Mammary epithelial cell (primary cell): ENCODE measurements at regions of chr3 and their contacts with region 1.

Region 1: DNA sequence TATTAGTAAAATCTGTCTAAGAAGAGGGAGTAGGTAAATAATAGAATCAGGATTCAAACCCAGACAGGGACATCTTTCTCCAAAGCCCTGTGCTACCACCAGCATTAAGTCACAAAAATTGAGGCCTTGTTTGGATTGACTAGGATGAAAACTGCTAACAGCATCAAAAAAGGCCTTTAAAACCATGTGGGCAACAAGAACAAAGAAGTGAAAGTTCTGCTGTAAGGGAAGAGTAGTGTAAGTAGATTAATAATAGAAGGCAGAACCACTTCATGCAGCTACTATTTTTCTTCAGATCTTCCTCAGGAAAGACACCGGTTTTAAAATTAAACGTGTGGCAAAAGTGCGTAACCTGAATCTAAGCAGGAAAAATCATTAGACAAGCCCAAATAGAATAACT is 15.3 kb upstream of the KBTBD12 start:
- DNase-seq: no peak
- H3K4me3 ChIP-seq: no peak overlapping the region
- H3K27ac ChIP-seq: no peak overlapping the region
- H3K4me1 ChIP-seq: no peaks in the 10 kb centered on the region
- H3K27me3 ChIP-seq: no peaks in the 10 kb centered on the region
- CTCF ChIP-seq: no peak

Region 2: DNA sequence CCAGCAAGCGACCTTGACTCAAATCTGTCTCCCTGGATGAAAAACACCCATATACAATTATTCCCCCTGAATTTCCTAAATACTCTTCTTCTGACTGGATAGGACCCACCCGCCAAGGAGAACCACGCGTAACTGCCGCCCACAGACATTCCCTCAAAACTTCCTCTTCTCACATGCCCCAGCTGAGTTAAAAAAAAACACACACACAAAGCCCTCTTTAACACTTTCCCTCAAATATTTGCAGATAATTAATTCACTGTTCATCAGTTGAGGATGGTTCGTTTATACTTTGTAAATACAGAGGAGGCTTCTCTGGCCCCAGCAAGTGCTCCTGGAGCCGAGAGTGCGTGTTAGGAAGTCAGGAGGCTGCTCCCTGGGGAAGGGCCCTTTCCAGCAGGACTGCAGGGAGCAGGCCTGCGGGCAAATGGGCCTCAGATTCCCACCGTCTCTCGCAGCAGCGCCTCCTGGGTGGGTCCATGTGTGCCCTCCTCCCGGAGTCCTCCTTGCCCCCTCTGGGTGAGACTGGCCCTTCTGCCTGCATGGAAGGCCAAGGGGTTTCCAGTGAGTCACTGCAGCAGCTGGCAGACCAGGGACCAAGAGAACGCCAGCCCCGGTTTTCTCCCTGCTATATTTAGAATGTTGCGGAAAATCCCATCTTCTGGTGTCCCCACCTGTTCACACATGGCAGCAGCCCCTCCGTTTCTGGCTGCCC is 124.2 kb before region 1 on chr3:
- CTCF ChIA-PET with region 1: no interaction called
- dilution Hi-C with region 1: no loop called
- in situ Hi-C with region 1: no loop called
- intact Hi-C with region 1: no loop called
- DNase-seq: peak; percentile 54
- H3K4me3 ChIP-seq: no peak overlapping the region
- H3K27ac ChIP-seq: no peak overlapping the region
- H3K4me1 ChIP-seq: peaks cover 23% of the 10 kb centered on the region
- H3K27me3 ChIP-seq: no peaks in the 10 kb centered on the region
- CTCF ChIP-seq: no peak

Region 3: DNA sequence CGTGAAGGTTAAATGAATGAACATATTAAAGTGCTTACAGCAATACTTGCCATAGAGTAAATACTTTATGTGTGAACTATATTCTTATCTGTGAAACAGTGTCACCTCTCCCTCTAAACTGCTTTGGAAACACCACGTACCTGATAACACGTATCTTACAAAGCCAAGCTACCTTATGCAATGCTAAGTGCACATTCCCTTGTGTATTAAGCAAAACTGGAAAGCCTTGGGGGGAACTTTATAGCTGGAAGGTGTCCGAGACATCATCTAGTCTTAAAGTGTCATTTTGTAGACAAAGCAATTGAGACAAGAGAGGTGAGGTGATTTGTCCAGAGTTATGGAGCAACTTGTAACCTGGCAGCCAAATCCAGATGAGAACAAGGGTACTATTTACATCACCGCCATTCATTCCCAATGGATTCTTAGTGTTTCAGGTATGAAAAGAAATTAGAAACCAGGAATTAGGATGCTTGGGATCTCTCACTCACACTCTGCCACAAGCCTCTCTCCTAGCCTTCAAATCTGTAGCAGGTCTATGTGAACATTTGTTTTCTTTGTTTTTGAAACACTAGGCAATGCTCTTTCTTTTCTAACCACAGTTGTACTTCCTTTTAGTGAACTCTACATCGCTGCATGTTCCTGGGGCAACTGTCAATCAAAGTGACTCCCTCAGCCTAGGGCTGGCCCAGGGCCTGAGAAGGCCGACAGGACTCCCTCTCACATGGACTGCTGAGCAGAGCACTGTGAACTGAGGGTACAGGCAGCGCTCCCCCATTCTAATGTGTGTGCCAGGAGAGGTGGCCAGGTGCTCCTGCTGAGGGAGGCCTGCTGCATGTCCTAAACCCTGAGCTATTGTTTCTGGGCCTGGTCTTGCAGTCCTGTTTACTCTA is 63.5 kb before region 1 on chr3:
- CTCF ChIA-PET with region 1: no interaction called
- dilution Hi-C with region 1: loop called (anchors 5 kb)
- in situ Hi-C with region 1: no loop called
- intact Hi-C with region 1: no loop called
- DNase-seq: no peak
- H3K4me3 ChIP-seq: no peak overlapping the region
- H3K27ac ChIP-seq: no peak overlapping the region
- H3K4me1 ChIP-seq: no peaks in the 10 kb centered on the region
- H3K27me3 ChIP-seq: no peaks in the 10 kb centered on the region
- CTCF ChIP-seq: no peak